Aorta (tissue), 5 donors: ENCODE measurements at regions of chr2 and their contacts with region 1.

Region 1: DNA sequence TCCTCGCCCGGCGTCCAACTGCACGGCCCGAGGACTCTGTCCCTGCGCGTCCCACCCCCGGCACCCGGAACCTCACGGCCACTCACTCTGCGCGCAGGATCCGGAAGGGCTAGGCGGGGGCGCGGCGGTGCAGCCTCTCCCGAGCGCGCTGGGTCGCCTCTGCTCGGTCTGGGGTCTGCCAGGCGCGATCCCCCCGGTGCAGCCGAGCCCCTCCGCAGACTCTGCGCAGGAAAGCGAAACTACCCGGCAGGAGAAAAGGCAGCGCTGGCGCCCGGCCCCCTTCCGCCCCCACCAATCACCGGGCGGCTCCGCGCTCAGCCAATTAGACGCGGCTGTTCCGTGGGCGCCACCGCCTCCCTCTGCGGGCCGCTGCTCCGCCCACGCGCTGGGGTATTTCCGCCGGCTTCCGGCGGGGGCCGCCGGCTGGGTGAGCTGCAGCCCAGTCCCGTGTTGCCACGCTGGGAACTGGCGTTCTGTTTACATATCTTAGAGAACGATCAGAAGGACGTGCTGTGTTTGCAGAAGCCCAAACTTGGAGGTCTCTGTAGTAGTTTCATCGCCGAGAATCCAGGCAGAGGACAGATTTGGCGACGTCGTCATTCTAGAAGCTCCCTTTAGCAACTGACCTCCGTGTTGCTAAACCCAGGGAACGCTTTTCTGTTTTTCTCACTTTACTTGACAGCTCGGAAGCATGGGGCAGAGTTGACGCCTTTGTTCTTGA is at the start of gene STAT1:
- DNase-seq: peak; percentile 96 to 98
- ATAC-seq: peak; percentile 99
- H3K4me3 ChIP-seq: peak within 1 kb of the TSS; percentile 60 to 82
- H3K27ac ChIP-seq: peak within 1 kb of the TSS; percentile 33 to 93
- H3K4me1 ChIP-seq: no peaks in the 10 kb centered on the region
- H3K27me3 ChIP-seq: no peaks in the 10 kb centered on the region
- total RNA-seq, gene STAT1: 69.1 to 70.7 TPM

Region 2: GRCh38 chr2:189267925-189268579 is 1746.0 kb before region 1 on chr2:
- intact Hi-C with region 1: no loop called
- DNase-seq: no peak
- ATAC-seq: no peak
- H3K4me3 ChIP-seq: no peak overlapping the region
- H3K27ac ChIP-seq: no peak overlapping the region
- H3K4me1 ChIP-seq: no peaks in the 10 kb centered on the region
- H3K27me3 ChIP-seq: no peaks in the 10 kb centered on the region

Region 3: GRCh38 chr2:190853531-190854383 is 160.3 kb before region 1 on chr2:
- intact Hi-C with region 1: loop called in 1 of 2 experiments (anchors 5 kb)
- DNase-seq: no peak
- ATAC-seq: no peak
- H3K4me3 ChIP-seq: no peak overlapping the region
- H3K27ac ChIP-seq: no peak overlapping the region
- H3K4me1 ChIP-seq: peaks cover 0 to 10% of the 10 kb centered on the region in 2 donors
- H3K27me3 ChIP-seq: no peaks in the 10 kb centered on the region